Posterior vena cava (tissue), 2 donors: ENCODE measurements at regions of chr2 and their contacts with region 1.

Region 1: GRCh38 chr2:88669371-88670214 is 21.9 kb upstream of the RPIA start:
- DNase-seq: no peak

Region 2: GRCh38 chr2:88590998-88591613 is 78.5 kb before region 1 on chr2:
- intact Hi-C with region 1: loop called (anchors 2 to 5 kb)
- DNase-seq: no peak

Region 3: DNA sequence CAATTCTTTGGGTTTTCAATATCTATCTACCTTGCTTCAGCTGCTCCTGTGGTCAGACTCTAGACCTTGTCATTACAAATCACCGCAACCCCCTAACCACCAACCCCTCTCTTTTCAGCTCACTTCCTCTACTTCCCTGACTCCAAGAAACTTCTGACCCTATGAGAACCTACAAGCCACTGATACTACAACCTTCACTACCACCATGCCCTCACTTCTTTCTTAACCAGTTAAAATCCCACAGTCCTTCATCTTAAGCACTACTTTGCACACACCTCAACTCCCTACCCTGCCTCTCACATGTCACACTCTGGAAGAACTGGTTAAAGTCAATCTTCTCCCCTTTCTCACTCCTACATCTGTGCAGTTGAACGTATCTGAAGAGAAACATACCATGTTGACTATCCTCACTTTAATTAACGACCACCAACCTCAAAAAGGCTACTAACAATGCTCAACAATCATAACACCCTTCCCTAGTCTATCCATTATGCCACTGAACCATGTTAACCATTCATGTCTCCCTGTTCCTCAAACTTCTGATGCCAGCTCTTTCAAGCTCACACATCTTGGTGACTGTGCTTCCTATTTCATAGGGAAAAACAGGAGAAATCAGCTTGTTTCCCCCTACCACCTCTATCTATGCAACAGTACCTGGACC is 55.0 kb before region 1 on chr2:
- intact Hi-C with region 1: no loop called
- DNase-seq: no peak

Region 4: GRCh38 chr2:88753833-88754584 is 84.4 kb after region 1 on chr2:
- intact Hi-C with region 1: no loop called
- DNase-seq: no peak

Region 5: DNA sequence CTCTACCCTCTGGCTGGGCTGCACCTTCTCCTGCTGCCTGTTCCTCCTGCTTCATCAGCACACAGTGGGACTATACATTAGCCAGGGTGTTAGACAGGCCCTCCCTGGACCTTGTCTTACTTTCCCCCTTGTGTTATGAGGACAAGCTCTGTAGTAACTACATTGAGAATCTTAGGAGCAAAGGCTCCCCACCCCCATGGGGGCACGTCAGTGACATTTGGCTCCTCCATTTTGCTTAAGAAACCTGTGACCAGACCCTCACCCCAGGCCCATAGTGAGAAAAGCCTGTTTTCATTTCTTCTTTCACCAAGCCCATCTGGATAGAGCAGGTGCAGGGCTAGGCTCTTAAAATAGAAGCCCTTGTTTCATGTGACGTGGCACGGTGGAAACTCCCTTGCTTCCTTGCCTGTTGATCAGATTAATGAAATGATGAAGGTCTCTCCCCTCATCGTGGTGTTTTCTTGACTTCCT is 168.6 kb after region 1 on chr2:
- intact Hi-C with region 1: no loop called
- DNase-seq: no peak